CD8-positive, alpha-beta T cell (primary cell): ENCODE measurements at regions of chr22 and their contacts with region 1.

Region 1: GRCh38 chr22:40950962-40951794 is at the start of gene RBX1:
- DNase-seq: peak; percentile 97 to 99 (median 99)
- ATAC-seq: peak; percentile 84
- H3K4me3 ChIP-seq: peak within 1 kb of the TSS; percentile 95 to 100
- H3K4me3 Mint-ChIP-seq: peak within 1 kb of the TSS; percentile 100
- H3K27ac ChIP-seq: peak within 1 kb of the TSS; percentile 99 to 100
- H3K27ac Mint-ChIP-seq: peak within 1 kb of the TSS; percentile 100
- H3K4me1 ChIP-seq: peaks cover 28% of the 10 kb centered on the region
- H3K4me1 Mint-ChIP-seq: peaks cover 33% of the 10 kb centered on the region
- H3K27me3 ChIP-seq: no peaks in the 10 kb centered on the region
- H3K27me3 Mint-ChIP-seq: no peaks in the 10 kb centered on the region
- CTCF ChIP-seq: no peak
- total RNA-seq, gene RBX1: 22.1 to 22.3 TPM

Region 2: DNA sequence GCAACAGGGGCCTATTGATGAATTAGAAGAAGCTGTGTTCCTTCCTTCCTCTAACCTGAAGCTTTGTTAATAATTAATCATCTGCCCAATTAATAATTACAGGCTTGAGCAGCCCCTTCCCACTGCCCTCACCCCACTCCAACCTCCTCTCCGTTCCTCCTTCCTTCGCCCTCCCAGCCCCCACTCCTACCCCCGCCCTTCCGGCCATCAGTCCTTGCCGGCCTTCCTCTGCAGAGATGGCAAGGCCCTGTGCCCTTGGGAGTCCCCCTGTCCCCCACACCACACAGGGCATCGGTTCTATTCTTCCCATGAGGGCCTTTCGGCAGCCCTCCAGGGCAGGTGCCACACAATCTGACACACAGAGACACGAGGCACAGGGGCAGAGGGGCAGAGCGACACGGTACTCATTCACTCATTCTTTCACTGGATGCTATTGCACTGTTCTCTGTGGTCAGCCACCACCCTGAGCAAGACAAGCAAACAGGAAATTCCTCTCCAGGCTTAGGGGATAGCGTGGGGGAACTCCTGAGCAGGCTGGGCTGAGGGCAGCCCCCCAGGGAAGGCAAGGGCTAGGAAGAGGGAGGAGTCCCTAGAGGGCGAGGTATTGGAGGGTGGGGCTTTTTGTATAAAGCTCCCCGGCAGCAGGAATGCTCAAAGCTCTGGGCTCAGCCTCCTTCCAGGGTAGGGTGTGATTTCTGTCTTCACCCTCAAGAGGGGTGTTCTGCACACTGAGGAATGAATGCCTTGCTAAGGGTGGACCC is 1479.6 kb before region 1 on chr22:
- CTCF ChIA-PET with region 1: no interaction called
- POLR2A ChIA-PET with region 1: no interaction called
- intact Hi-C with region 1: no loop called
- DNase-seq: peak in 2 of 9 experiments; percentile 28 to 58
- ATAC-seq: peak; percentile 65
- H3K4me3 ChIP-seq: no peak overlapping the region
- H3K4me3 Mint-ChIP-seq: peak overlapping the region; percentile 43
- H3K27ac ChIP-seq: no peak overlapping the region
- H3K27ac Mint-ChIP-seq: peak overlapping the region; percentile 78
- H3K4me1 ChIP-seq: peaks cover 24% of the 10 kb centered on the region
- H3K4me1 Mint-ChIP-seq: peaks cover 22% of the 10 kb centered on the region
- H3K27me3 ChIP-seq: no peaks in the 10 kb centered on the region
- H3K27me3 Mint-ChIP-seq: no peaks in the 10 kb centered on the region
- CTCF ChIP-seq: no peak

Region 3: DNA sequence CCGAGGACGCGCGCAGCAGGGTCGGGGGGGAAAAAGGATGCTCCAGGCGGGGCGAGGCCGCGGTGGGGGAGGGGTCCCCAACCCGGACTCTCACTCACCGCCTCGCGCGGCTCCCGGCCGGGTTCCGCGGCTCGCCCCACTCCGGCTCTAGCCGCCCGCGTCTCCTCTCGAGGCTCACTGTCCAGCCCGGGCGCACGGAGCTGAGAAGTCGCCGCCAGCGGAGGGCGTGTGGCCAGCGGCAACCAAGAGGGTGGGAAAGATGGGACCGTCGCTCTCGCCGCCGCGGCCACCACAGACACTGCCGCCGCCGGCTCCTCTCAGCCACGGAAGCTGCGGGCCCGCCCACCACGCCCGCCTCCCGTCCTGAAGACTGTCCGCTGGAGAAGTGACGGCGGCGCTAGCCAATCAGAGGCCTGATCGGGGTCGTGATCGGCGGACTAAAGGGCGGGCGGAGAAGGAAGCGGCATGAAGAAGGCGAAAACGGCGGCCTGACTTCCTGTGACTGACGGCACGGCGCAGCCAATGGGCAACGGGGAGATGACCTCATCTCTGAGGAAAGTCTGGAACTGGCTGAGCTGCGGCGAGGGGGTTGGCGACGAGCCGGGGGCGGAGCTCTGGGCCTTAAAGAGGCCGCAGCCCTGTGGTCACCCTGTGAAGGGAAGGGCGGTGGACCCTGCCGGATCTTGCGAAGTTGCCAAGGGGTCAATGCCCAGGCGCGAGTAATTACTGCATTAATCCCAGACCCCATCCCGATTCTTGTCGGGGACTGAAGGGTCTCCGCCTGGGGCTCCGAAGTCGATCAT is 314.6 kb before region 1 on chr22 and contains the start of gene MRTFA:
- CTCF ChIA-PET with region 1: no interaction called
- POLR2A ChIA-PET with region 1: no interaction called
- intact Hi-C with region 1: loop called in 1 of 2 experiments (anchors 5 kb)
- DNase-seq: peak; percentile 98 to 100 (median 99)
- ATAC-seq: peak; percentile 93
- H3K4me3 ChIP-seq: peak within 1 kb of the TSS; percentile 98 to 100
- H3K4me3 Mint-ChIP-seq: peak within 1 kb of the TSS; percentile 99
- H3K27ac ChIP-seq: peak within 1 kb of the TSS; percentile 89
- H3K27ac Mint-ChIP-seq: peak within 1 kb of the TSS; percentile 98
- H3K4me1 ChIP-seq: peaks cover 34% of the 10 kb centered on the region
- H3K4me1 Mint-ChIP-seq: peaks cover 45% of the 10 kb centered on the region
- H3K27me3 ChIP-seq: no peaks in the 10 kb centered on the region
- H3K27me3 Mint-ChIP-seq: no peaks in the 10 kb centered on the region
- CTCF ChIP-seq: no peak
- total RNA-seq, gene MRTFA: 53.7 to 56.7 TPM

Region 4: GRCh38 chr22:40898850-40899357 is 52.3 kb before region 1 on chr22:
- CTCF ChIA-PET with region 1: no interaction called
- POLR2A ChIA-PET with region 1: no interaction called
- intact Hi-C with region 1: no loop called
- DNase-seq: peak in 2 of 9 experiments; percentile 54 to 67
- ATAC-seq: peak; percentile 38
- H3K4me3 ChIP-seq: no peak overlapping the region
- H3K4me3 Mint-ChIP-seq: no peak overlapping the region
- H3K27ac ChIP-seq: no peak overlapping the region
- H3K27ac Mint-ChIP-seq: no peak overlapping the region
- H3K4me1 ChIP-seq: no peaks in the 10 kb centered on the region
- H3K4me1 Mint-ChIP-seq: peaks cover 5% of the 10 kb centered on the region
- H3K27me3 ChIP-seq: no peaks in the 10 kb centered on the region
- H3K27me3 Mint-ChIP-seq: no peaks in the 10 kb centered on the region
- CTCF ChIP-seq: peak; percentile 40

Region 5: GRCh38 chr22:40922484-40923303 is 28.5 kb before region 1 on chr22:
- CTCF ChIA-PET with region 1: interaction called, 17 read pairs
- POLR2A ChIA-PET with region 1: interaction called, 15 read pairs
- intact Hi-C with region 1: loop called (anchors 1 kb)
- DNase-seq: peak in 4 of 9 experiments; percentile 1 to 82 (median 50)
- ATAC-seq: peak; percentile 98
- H3K4me3 ChIP-seq: no peak overlapping the region
- H3K4me3 Mint-ChIP-seq: peak overlapping the region; percentile 40
- H3K27ac ChIP-seq: no peak overlapping the region
- H3K27ac Mint-ChIP-seq: peak overlapping the region; percentile 33
- H3K4me1 ChIP-seq: peaks cover 5% of the 10 kb centered on the region
- H3K4me1 Mint-ChIP-seq: peaks cover 3% of the 10 kb centered on the region
- H3K27me3 ChIP-seq: no peaks in the 10 kb centered on the region
- H3K27me3 Mint-ChIP-seq: no peaks in the 10 kb centered on the region
- CTCF ChIP-seq: peak; percentile 80

Region 6: DNA sequence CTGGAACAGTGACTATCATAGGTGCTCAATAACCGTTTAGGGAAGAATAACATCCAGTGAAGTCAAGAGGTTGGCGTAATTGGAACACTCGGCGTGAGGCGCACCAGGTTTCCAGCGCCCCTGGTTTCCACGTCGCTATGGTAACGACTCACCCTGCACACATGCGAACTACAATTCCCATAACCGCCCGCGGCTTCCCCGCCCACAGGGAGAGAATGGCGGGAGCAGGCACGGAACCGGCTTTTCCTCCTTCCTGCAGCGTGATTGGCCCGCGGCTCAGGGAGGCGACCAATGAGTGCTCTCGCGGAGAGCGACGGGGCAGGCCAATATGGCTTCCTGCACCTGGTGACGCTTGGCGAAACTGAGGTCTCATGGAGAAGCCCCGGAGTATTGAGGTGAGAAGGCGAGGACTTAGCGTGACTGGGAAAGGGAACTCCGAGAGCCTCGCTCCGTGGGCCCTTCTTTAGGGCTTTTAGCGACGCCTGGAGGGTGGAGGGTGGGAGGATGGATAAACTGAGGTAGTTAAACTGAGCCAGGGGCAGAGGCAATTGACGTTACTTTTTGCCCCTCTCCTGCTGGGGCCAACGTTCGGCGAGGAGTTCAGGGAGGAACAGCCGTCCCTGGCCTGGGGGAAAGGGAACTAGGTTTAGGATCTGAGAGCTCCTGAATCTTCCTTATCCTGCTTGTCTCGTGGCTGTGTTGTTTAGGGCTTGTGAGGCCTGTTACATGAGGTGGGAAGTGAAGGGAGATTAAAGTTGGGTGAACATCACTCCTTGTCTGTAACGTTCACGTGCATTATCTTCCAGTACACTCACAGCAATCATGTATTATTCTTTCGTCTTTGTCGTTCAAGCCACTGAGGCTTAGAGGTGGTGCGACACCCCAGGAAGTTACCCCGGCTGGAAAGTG is 254.1 kb after region 1 on chr22 and contains the start of gene L3MBTL2:
- CTCF ChIA-PET with region 1: no interaction called
- POLR2A ChIA-PET with region 1: no interaction called
- intact Hi-C with region 1: loop called (anchors 1 to 2 kb)
- DNase-seq: peak; percentile 96 to 99 (median 98)
- ATAC-seq: peak; percentile 100
- H3K4me3 ChIP-seq: peak within 1 kb of the TSS; percentile 77 to 83
- H3K4me3 Mint-ChIP-seq: peak within 1 kb of the TSS; percentile 97
- H3K27ac ChIP-seq: peak within 1 kb of the TSS; percentile 60 to 83
- H3K27ac Mint-ChIP-seq: peak within 1 kb of the TSS; percentile 96
- H3K4me1 ChIP-seq: peaks cover 9% of the 10 kb centered on the region
- H3K4me1 Mint-ChIP-seq: peaks cover 32% of the 10 kb centered on the region
- H3K27me3 ChIP-seq: peaks cover 0 to 2% of the 10 kb centered on the region in 2 experiments
- H3K27me3 Mint-ChIP-seq: peaks cover 9% of the 10 kb centered on the region
- CTCF ChIP-seq: no peak
- total RNA-seq, gene L3MBTL2: 16.3 to 20.3 TPM

Region 7: GRCh38 chr22:41301105-41302020 is 350.2 kb after region 1 on chr22 and contains the start of gene ZC3H7B:
- CTCF ChIA-PET with region 1: no interaction called
- POLR2A ChIA-PET with region 1: interaction called, 7 read pairs
- intact Hi-C with region 1: loop called (anchors 1 to 5 kb)
- DNase-seq: peak; percentile 64 to 94 (median 81)
- ATAC-seq: peak; percentile 93
- H3K4me3 ChIP-seq: peak within 1 kb of the TSS; percentile 81 to 96
- H3K4me3 Mint-ChIP-seq: peak within 1 kb of the TSS; percentile 83
- H3K27ac ChIP-seq: peak within 1 kb of the TSS; percentile 72 to 80
- H3K27ac Mint-ChIP-seq: peak within 1 kb of the TSS; percentile 95
- H3K4me1 ChIP-seq: peaks cover 16% of the 10 kb centered on the region
- H3K4me1 Mint-ChIP-seq: peaks cover 29% of the 10 kb centered on the region
- H3K27me3 ChIP-seq: no peaks in the 10 kb centered on the region
- H3K27me3 Mint-ChIP-seq: no peaks in the 10 kb centered on the region
- CTCF ChIP-seq: peak; percentile 43
- total RNA-seq, gene ZC3H7B: 30.7 to 30.8 TPM

Region 8: DNA sequence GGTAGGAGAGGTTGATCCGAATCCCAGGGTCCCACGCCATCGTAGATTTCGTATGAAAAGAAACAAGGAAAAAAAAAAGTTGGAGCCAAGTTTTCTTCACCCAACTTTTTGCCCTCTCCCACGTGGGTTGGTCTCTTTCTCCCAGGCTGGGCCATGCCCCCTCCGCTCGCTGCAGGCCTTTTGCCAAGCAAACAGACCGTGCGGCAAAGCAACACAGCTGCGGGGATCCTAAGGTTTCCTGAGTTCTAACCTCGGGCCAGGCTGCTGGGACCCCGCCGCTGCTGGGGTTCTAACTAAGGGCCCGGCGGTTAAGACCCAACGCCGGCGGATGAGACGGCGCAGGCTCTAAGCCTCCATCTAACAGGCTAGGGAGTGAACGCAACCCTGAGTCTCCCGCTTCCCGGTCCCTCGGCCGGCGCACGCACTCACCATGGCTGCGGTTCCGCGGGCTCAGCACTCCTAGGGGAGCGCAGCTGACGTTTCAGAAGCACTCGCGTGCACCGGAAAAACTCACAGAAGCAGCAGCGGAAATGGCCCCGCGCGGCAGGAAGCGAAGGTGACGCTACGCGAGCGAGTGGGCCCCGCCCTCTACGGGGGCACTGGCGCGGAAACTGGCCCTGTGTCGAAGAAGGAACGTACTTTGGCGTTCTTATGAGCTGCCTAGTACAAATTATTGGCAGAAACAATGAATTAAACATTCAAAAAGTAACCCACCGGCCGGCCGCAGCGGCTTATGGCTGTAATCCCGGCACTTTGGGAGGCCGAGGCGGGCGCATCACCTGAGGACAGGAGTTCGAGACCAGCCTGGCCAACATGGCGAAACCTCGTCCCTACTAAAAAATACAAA is 737.4 kb after region 1 on chr22 and contains the start of gene SNU13:
- CTCF ChIA-PET with region 1: no interaction called
- POLR2A ChIA-PET with region 1: no interaction called
- intact Hi-C with region 1: loop called in 1 of 2 experiments (anchors 2 kb)
- DNase-seq: peak; percentile 84 to 97 (median 93)
- ATAC-seq: peak; percentile 92
- H3K4me3 ChIP-seq: peak within 1 kb of the TSS; percentile 90 to 96
- H3K4me3 Mint-ChIP-seq: peak within 1 kb of the TSS; percentile 90
- H3K27ac ChIP-seq: peak within 1 kb of the TSS; percentile 97
- H3K27ac Mint-ChIP-seq: peak within 1 kb of the TSS; percentile 95
- H3K4me1 ChIP-seq: peaks cover 17% of the 10 kb centered on the region
- H3K4me1 Mint-ChIP-seq: peaks cover 30% of the 10 kb centered on the region
- H3K27me3 ChIP-seq: no peaks in the 10 kb centered on the region
- H3K27me3 Mint-ChIP-seq: no peaks in the 10 kb centered on the region
- CTCF ChIP-seq: no peak
- total RNA-seq, gene SNU13: 158 to 173 TPM